Mammary epithelial cell (primary cell): ENCODE measurements at regions of chr7 and their contacts with region 1.

Region 1: DNA sequence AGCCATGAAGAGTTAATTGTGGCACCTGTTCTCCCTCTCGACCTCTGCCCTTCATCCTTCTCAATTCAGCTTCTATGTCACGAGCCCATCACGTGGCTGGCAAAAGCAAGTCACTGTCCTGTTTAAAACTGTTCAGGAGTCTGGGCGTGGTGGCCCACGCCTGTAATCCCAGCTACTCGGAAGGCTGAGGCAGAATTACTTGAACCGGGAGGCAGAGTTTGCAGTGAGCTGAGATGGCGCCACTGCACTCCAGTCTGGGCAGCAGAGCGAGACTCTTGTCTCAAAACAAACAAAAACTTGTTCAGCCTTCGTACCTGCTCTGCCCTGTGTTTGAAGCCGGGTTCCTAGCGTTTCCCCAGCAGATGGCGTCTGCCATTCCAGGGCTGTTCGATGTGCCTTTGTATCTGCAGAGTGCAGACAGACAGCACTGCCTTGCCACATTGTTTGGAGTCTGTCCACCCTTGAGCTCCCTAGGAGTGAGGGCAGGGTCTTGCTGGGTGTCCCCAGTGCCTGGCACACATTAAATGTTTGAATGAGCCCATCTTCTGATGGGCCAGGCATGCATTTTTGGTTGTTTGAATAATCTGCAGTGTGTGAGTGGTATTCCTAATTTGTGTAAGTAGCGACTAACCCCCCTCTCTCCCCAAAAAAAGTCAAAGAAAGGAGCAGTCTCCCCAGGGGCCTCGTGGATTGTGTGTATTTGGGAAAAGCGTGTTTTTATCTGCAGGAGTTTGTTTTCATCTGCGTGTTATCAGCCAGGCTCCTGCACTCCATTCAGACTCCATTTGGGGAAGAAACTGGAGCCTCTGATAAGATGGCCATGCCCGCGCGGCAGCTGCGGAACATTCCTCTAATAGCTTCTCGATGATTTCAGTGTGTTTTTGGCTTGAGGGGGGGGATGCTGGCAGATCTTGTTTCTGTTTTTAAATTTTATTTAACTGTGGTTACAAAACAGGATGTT is 61.2 kb downstream of the DNAJB6 start:
- DNase-seq: peak; percentile 22
- H3K4me3 ChIP-seq: no peak overlapping the region
- H3K27ac ChIP-seq: no peak overlapping the region
- H3K4me1 ChIP-seq: peaks cover 2% of the 10 kb centered on the region
- H3K27me3 ChIP-seq: no peaks in the 10 kb centered on the region
- CTCF ChIP-seq: peak; percentile 22 to 41

Region 2: DNA sequence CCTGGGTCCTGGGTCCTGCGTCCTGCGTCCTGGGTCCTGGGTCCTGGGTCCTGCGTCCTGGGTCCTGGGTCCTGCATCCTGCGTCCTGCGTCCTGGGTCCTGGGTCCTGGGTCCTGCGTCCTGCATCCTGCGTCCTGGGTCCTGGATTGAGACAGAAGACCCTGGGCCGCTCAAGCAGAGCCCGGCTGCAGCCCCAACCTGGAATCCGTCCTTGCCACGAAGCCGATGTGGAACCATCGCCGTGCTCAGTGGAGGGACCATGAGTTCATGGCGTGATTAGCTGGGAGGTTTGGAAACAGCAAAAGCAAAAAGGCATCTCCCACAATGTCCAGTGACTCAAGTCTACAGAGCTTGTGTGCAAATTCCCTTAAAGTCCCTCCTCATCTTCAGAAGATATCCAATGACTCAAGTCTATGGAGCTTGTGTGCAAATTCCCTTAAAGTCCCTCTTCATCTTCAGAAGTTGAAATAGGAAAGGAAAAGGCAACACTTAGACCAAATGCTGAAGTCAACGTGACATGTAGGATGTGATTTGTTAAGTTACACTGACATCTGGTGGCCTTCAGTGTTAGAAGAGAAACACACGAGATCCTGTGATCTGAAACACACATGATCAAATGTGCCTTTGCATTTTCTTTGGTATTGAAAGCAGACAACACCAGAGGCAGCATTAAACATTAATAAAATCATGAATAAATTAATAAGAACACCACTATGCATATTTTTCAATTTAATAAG is 1009.7 kb after region 1 on chr7:
- CTCF ChIA-PET with region 1: no interaction called
- dilution Hi-C with region 1: no loop called
- in situ Hi-C with region 1: no loop called
- intact Hi-C with region 1: loop called (anchors 2 kb)
- DNase-seq: peak; percentile 11
- H3K4me3 ChIP-seq: no peak overlapping the region
- H3K27ac ChIP-seq: no peak overlapping the region
- H3K4me1 ChIP-seq: no peaks in the 10 kb centered on the region
- H3K27me3 ChIP-seq: no peaks in the 10 kb centered on the region
- CTCF ChIP-seq: peak; percentile 23 to 40